ENCODE measurements at regions of chr20 and their contacts with region 1.

Region 1: GRCh38 chr20:50267041-50267865 is 76.6 kb downstream of the CEBPB start:
- DNase-seq: peak in 1 of 2 donors; percentile 89
- ATAC-seq: no peak
- H3K4me3 ChIP-seq: no peak overlapping the region
- H3K27ac ChIP-seq: no peak overlapping the region
- H3K4me1 ChIP-seq: no peaks in the 10 kb centered on the region
- H3K27me3 ChIP-seq: no peaks in the 10 kb centered on the region

Region 2: DNA sequence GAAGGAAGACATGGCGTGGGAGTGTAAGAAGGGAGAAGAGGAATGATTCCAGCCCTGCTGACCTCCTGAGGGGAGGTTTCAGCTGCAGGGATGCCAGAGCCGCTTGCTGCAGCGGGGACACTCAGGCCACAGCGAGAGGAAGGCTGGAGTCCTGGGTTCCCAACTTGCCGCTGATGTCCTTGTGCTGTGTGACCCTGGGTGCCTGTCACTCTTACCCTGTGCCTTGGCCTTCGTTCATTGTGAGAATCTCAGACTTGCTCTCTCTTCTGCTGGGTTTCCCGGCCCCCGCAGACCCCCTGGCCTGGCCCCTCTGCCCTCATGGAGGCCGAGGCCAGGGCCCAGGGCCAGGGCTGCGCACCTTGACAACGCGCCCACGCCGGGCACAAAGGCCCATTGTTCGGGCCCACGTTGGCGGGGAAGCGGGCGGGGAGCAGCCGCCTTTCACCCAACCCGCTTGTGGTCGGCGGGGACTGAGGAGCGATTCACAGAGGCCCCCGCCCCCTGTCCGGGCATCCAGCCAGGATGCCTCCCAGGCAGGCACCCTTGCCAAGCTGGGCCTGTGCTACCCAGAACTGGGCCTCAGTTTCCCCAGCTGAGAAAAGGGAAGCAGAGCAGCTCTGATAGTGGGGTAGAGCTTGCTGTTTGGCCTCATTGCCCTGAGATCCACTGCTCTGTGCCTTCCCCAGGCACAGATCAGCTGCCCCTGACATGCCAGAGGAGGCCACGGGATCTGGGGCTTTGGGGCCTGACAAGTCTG is 24.2 kb before region 1 on chr20:
- intact Hi-C with region 1: loop called in 1 of 2 experiments (anchors 1 kb)
- DNase-seq: no peak
- ATAC-seq: no peak
- H3K4me3 ChIP-seq: no peak overlapping the region
- H3K27ac ChIP-seq: no peak overlapping the region
- H3K4me1 ChIP-seq: no peaks in the 10 kb centered on the region
- H3K27me3 ChIP-seq: no peaks in the 10 kb centered on the region

Region 3: GRCh38 chr20:50879649-50880550 is 612.6 kb after region 1 on chr20:
- intact Hi-C with region 1: no loop called
- DNase-seq: peak in 1 of 2 donors; percentile 56
- ATAC-seq: no peak
- H3K4me3 ChIP-seq: no peak overlapping the region
- H3K27ac ChIP-seq: no peak overlapping the region
- H3K4me1 ChIP-seq: no peaks in the 10 kb centered on the region
- H3K27me3 ChIP-seq: no peaks in the 10 kb centered on the region

Measured in aorta (tissue), 5 donors.